Caco-2 (cell line): ENCODE measurements at regions of chr18 and their contacts with region 1.

Region 1: GRCh38 chr18:51383116-51383515 is 185.6 kb upstream of the MEX3C start:
- DNase-seq: no peak
- H3K4me3 ChIP-seq: no peak overlapping the region
- H3K4me3 Mint-ChIP-seq: no peak overlapping the region
- H3K27ac Mint-ChIP-seq: no peak overlapping the region
- H3K4me1 ChIP-seq: no peaks in the 10 kb centered on the region
- H3K4me1 Mint-ChIP-seq: no peaks in the 10 kb centered on the region
- H3K27me3 ChIP-seq: no peaks in the 10 kb centered on the region
- H3K27me3 Mint-ChIP-seq: no peaks in the 10 kb centered on the region
- CTCF ChIP-seq: no peak

Region 2: GRCh38 chr18:51235011-51235789 is 147.9 kb before region 1 on chr18:
- CTCF ChIA-PET with region 1: no interaction called
- POLR2A ChIA-PET with region 1: no interaction called
- intact Hi-C with region 1: loop called (anchors 10 kb)
- DNase-seq: no peak
- H3K4me3 ChIP-seq: no peak overlapping the region
- H3K4me3 Mint-ChIP-seq: no peak overlapping the region
- H3K27ac Mint-ChIP-seq: peak overlapping the region; percentile 68
- H3K4me1 ChIP-seq: peaks cover 18% of the 10 kb centered on the region
- H3K4me1 Mint-ChIP-seq: peaks cover 18% of the 10 kb centered on the region
- H3K27me3 ChIP-seq: no peaks in the 10 kb centered on the region
- H3K27me3 Mint-ChIP-seq: no peaks in the 10 kb centered on the region
- CTCF ChIP-seq: no peak